Activated CD4-positive, alpha-beta T cell treated with anti-CD3 and anti-CD28 coated beads for 36 hours (primary cell): ENCODE measurements at regions of chr10 and their contacts with region 1.

Region 1: DNA sequence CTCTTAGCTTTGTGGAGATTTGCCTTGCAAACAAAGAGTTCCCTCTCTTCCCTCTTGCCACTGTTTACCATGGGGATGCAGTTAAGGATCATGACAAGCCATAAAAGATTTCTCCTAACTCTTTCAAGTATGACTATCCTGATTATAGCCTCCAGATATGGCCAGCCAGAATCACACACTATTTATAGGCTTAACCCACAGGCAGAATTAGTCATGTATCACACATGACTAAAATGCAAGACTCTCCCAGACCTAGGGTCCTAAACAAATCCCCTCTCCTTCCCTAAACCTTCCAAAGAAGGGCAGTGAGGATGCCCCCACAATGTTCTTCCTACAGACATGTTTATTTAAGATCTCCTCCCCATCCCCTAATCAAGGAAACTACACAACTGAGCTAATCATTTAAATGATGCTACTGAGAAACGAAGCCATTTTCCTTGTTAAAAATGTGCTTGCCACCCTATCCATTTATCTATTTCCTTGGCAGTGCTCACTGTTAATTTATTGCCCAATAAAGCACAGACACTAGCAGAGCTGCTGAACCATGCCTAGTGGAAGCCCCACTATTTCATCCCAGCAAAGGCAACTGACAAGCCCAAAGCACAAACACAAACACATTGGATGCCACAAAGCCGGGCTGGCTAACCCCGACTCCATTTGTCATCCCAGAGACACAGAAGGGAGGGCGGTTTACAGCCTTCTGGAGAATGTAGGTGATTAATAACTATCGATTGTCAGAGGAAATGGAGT is 363.4 kb downstream of the KCNMA1 start:
- DNase-seq: no peak
- ATAC-seq: no peak
- H3K4me3 Mint-ChIP-seq: no peak overlapping the region
- H3K27ac Mint-ChIP-seq: no peak overlapping the region
- H3K4me1 Mint-ChIP-seq: no peaks in the 10 kb centered on the region
- H3K27me3 Mint-ChIP-seq: peaks cover 10% of the 10 kb centered on the region

Region 2: GRCh38 chr10:76047521-76047920 is 1226.7 kb before region 1 on chr10:
- CTCF ChIA-PET with region 1: no interaction called
- POLR2A ChIA-PET with region 1: interaction called, 11 read pairs
- intact Hi-C with region 1: no loop called
- DNase-seq: no peak
- ATAC-seq: no peak
- H3K4me3 Mint-ChIP-seq: no peak overlapping the region
- H3K27ac Mint-ChIP-seq: no peak overlapping the region
- H3K4me1 Mint-ChIP-seq: peaks cover 2% of the 10 kb centered on the region
- H3K27me3 Mint-ChIP-seq: peaks cover 6% of the 10 kb centered on the region